Gastrocnemius medialis (tissue), 4 donors: ENCODE measurements at regions of chr10 and their contacts with region 1.

Region 1: GRCh38 chr10:93941606-93942005 is 47.8 kb downstream of the SLC35G1 start:
- DNase-seq: peak; percentile 21 to 26
- ATAC-seq: peak; percentile 83 to 86
- H3K4me3 ChIP-seq: peak overlapping the region in 1 of 4 donors; percentile 27
- H3K27ac ChIP-seq: peak overlapping the region in 3 of 4 donors; percentile 6 to 63 (median 62)
- H3K4me1 ChIP-seq: peaks cover 34 to 37% of the 10 kb centered on the region in 2 donors
- H3K27me3 ChIP-seq: no peaks in the 10 kb centered on the region
- CTCF ChIP-seq: no peak
- POLR2A ChIP-seq: no peak

Region 2: GRCh38 chr10:93873427-93874115 is 68.0 kb before region 1 on chr10:
- in situ Hi-C with region 1: no loop called
- intact Hi-C with region 1: no loop called
- DNase-seq: no peak
- ATAC-seq: no peak
- H3K4me3 ChIP-seq: no peak overlapping the region
- H3K27ac ChIP-seq: no peak overlapping the region
- H3K4me1 ChIP-seq: no peaks in the 10 kb centered on the region
- H3K27me3 ChIP-seq: no peaks in the 10 kb centered on the region
- CTCF ChIP-seq: no peak
- POLR2A ChIP-seq: no peak

Region 3: GRCh38 chr10:93893646-93894515 is 47.7 kb before region 1 on chr10 and contains the start of gene SLC35G1:
- in situ Hi-C with region 1: no loop called
- intact Hi-C with region 1: loop called (anchors 5 kb)
- DNase-seq: peak; percentile 19 to 45
- ATAC-seq: peak; percentile 91 to 92
- H3K4me3 ChIP-seq: peak within 1 kb of the TSS; percentile 68 to 99 (median 86)
- H3K27ac ChIP-seq: peak within 1 kb of the TSS; percentile 44 to 75 (median 68)
- H3K4me1 ChIP-seq: peaks cover 8 to 13% of the 10 kb centered on the region in 2 donors
- H3K27me3 ChIP-seq: no peaks in the 10 kb centered on the region
- CTCF ChIP-seq: no peak
- POLR2A ChIP-seq: peak; percentile 62
- total RNA-seq, gene SLC35G1: 0.78 to 3.4 (median 0.97) TPM